ENCODE measurements at regions of chr4 and their contacts with region 1.

Region 1: DNA sequence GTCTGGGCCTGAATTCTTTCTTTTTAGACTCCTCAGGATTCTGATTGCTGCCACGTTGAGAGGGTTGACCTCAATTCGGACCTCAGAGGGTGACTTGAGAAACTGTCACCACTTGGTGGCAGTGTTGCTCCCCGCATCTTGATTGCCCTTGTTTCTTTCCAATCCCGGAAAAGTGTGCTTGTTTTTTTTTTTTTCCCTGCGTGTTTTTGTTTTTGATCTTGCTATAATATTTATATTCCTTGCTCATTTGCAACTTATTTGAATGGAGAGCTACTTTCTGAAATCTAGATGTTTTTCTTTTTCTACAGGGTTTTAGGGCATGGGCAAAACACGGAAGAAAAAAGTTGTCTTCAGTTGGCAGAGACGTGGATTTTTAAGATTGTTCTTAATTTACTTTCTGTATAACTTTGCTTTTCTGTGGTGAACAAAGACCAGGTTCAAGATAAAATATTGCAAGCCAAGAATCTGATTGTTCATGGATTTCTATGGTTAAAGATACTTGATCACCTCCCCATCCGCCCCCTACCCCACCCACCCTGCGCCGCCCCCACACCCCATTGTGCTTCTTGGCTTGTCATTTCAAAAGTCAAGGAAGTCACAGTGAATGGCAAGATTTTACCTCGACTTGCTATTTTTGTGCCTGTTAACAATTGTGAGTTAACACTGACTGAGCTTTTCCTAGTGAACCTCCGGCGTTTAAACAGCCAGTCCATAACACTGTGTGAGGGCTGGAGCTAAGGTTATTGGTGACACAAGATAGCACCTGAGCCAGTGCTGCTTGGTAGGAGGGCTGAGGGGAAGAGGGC is 102.1 kb downstream of the PTTG2 start:
- DNase-seq: peak; percentile 83
- H3K4me3 Mint-ChIP-seq: peak overlapping the region; percentile 66
- H3K27ac Mint-ChIP-seq: peak overlapping the region; percentile 57
- H3K4me1 Mint-ChIP-seq: peaks cover 5% of the 10 kb centered on the region
- H3K27me3 Mint-ChIP-seq: no peaks in the 10 kb centered on the region
- CTCF ChIP-seq: peak; percentile 83

Region 2: GRCh38 chr4:38174801-38175200 is 112.5 kb after region 1 on chr4:
- CTCF ChIA-PET with region 1: interaction called, 24 read pairs
- POLR2A ChIA-PET with region 1: interaction called, 5 read pairs
- intact Hi-C with region 1: loop called (anchors 2 kb)
- DNase-seq: no peak
- H3K4me3 Mint-ChIP-seq: no peak overlapping the region
- H3K27ac Mint-ChIP-seq: peak overlapping the region; percentile 70
- H3K4me1 Mint-ChIP-seq: peaks cover 46% of the 10 kb centered on the region
- H3K27me3 Mint-ChIP-seq: no peaks in the 10 kb centered on the region
- CTCF ChIP-seq: no peak

Measured in MCF 10A (cell line).